Activated CD4-positive, alpha-beta T cell treated with anti-CD3 and anti-CD28 coated beads for 36 hours (primary cell): ENCODE measurements at regions of chr6 and their contacts with region 1.

Region 1: GRCh38 chr6:30396833-30397479 is 52.0 kb downstream of the RPP21 start:
- DNase-seq: peak; percentile 93
- ATAC-seq: peak; percentile 99
- H3K4me3 Mint-ChIP-seq: no peak overlapping the region
- H3K27ac Mint-ChIP-seq: no peak overlapping the region
- H3K4me1 Mint-ChIP-seq: peaks cover 2% of the 10 kb centered on the region
- H3K27me3 Mint-ChIP-seq: peaks cover 27% of the 10 kb centered on the region

Region 2: GRCh38 chr6:29864037-29864795 is 532.7 kb before region 1 on chr6:
- CTCF ChIA-PET with region 1: no interaction called
- POLR2A ChIA-PET with region 1: no interaction called
- intact Hi-C with region 1: no loop called
- DNase-seq: no peak
- ATAC-seq: no peak
- H3K4me3 Mint-ChIP-seq: no peak overlapping the region
- H3K27ac Mint-ChIP-seq: no peak overlapping the region
- H3K4me1 Mint-ChIP-seq: no peaks in the 10 kb centered on the region
- H3K27me3 Mint-ChIP-seq: peaks cover 30% of the 10 kb centered on the region

Region 3: DNA sequence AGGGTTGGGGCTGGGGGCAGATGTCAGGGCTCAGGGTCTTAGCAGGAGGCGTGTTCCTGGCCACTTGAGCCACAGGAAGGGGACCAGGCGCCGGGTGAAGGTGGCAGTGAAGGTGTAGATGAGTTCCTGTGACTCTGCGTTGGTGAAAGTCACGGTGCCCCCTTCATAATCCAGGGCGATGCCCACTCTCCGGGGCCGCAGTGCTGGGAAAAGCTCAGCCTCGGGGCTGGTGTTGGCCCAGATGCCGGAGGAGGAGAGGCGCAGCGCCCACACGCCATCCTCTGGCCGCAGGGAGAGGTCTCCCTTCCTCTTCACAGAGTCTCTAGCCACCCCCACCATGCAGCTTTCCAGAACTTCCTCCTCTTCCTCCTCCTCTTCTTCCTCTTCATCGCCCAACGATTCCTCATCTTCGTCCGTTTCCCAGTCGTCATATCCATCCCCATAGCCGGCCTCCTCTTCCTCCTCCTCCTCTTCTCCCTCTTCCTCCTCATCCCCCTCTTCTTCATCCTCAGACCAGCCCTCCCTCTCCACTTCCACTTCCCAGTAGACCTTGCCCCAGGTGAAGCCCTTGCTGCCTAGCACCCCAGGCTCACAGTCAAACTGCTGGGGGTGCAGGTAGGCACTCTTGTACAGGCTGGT is 211.0 kb before region 1 on chr6:
- CTCF ChIA-PET with region 1: no interaction called
- POLR2A ChIA-PET with region 1: no interaction called
- intact Hi-C with region 1: no loop called
- DNase-seq: no peak
- ATAC-seq: no peak
- H3K4me3 Mint-ChIP-seq: no peak overlapping the region
- H3K27ac Mint-ChIP-seq: no peak overlapping the region
- H3K4me1 Mint-ChIP-seq: no peaks in the 10 kb centered on the region
- H3K27me3 Mint-ChIP-seq: no peaks in the 10 kb centered on the region

Region 4: DNA sequence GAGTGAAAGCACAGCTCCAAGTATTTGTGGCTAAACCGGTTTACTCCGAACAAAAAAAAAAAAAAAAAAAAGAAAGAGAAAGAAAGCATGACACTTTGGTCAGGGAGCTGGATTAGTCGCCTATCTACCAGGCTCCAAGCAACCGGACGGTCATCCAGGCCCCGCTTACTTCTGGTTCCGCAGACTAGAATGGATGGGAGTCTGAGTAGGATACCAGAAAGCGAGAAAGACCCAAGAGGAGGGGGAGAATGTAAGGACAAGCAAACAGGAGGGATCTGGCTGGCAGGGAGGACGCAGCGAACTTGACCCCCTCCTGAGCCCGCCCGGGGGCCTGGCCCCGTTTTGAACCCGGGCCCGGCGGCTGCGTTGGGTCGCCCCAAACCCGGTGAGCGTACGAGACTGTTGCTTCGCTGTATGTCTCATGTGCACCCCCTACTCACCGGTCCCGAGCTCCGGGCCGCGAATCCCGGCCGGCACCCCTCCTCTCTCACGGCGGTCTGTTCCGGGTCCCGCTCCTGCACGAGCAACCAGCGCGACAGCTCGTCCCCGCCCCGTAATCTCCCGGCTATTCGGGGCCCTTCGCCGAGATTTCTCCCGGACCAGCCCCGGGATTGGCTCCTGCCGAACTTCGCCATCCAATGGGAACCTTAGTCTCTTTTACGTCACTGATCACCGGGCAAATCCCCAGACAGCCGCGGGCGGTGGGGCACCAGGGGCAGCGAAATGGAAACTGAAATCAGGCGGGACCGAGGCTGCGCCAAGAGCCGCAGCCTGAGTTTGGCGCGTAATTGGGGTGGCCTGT is 183.9 kb before region 1 on chr6 and contains the start of gene TRIM26:
- CTCF ChIA-PET with region 1: interaction called, 18 read pairs
- POLR2A ChIA-PET with region 1: interaction called, 3 read pairs
- intact Hi-C with region 1: no loop called
- DNase-seq: peak; percentile 98
- ATAC-seq: peak; percentile 90
- H3K4me3 Mint-ChIP-seq: peak within 1 kb of the TSS; percentile 89
- H3K27ac Mint-ChIP-seq: peak within 1 kb of the TSS; percentile 99
- H3K4me1 Mint-ChIP-seq: peaks cover 50% of the 10 kb centered on the region
- H3K27me3 Mint-ChIP-seq: no peaks in the 10 kb centered on the region
- total RNA-seq, gene TRIM26: 48.4 to 60.4 TPM

Region 5: GRCh38 chr6:30219244-30219643 is 177.7 kb before region 1 on chr6:
- CTCF ChIA-PET with region 1: interaction called, 18 read pairs
- POLR2A ChIA-PET with region 1: no interaction called
- intact Hi-C with region 1: loop called (anchors 1 kb)
- DNase-seq: peak; percentile 69
- ATAC-seq: peak; percentile 78
- H3K4me3 Mint-ChIP-seq: no peak overlapping the region
- H3K27ac Mint-ChIP-seq: no peak overlapping the region
- H3K4me1 Mint-ChIP-seq: peaks cover 16% of the 10 kb centered on the region
- H3K27me3 Mint-ChIP-seq: no peaks in the 10 kb centered on the region

Region 6: DNA sequence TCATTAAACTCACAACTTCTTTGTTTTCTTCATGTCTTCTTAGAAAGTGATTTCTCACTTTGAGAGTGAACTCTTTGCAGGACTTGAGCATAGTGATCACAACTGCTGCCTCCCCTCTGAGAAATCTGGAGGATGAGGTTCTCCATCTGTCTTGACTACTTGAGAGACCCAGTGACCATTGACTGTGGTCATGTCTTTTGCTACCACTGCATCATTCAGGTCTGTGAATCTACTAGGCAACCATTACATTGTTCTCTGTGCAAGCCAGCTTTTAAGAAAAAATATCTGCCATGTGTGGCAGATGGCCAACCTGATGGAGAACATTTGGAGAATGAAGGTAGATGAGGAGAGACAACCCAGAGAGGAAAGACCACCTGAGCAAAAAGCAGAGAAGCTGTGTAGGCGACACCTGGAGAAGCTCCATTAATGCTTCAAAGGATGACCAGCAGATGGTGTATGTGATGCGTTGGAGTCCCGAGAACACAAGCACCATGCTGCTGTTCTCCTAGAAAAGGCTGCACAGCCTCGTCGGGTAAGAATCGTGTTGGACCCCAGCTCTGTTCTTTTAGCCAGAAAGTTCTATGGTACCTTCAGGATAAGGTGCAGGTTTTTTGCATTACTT is 158.7 kb before region 1 on chr6:
- CTCF ChIA-PET with region 1: interaction called, 8 read pairs
- POLR2A ChIA-PET with region 1: no interaction called
- intact Hi-C with region 1: loop called (anchors 1 kb)
- DNase-seq: peak; percentile 45
- ATAC-seq: peak; percentile 53
- H3K4me3 Mint-ChIP-seq: no peak overlapping the region
- H3K27ac Mint-ChIP-seq: no peak overlapping the region
- H3K4me1 Mint-ChIP-seq: no peaks in the 10 kb centered on the region
- H3K27me3 Mint-ChIP-seq: peaks cover 31% of the 10 kb centered on the region

Region 7: DNA sequence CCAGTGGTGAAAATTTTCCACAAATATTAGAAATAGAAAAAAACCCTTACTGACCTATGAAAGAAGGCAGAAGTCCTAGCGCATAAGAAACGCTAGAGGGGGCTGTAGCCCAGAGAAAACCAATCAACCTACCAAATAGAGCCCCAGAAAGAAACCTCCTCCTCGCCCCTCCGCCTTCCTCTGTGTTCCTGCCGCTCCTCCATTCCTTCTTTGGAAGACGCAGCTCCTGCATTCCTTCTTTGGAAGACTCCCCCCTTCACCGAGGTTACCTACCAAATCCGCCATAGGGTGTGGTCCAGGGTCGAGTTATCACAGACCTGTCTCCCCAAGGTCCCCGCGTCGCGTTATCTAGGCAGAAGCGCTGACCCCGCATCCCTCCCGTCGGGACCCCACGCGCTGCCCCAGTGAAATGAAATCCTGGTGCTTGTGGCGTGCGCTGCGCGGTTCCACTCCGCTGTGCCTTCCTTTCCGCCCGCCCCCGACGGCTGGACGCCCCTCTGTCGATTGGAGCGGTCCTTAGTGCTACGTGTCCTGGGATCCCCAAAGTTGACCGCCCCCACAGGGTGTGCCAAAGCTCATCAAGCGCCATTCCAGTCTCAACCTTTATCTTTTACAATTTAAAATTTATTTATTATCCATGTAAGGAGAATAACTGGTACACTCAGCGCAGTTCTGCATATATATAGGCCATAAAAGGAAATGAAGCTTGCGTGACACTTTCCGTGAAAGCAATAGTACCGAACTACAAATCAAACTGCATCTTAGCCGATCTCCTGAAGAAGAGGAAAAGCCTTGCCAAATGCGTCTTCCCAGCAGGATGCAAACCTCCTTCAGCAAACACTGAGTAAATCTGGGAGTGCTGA is 39.0 kb before region 1 on chr6:
- CTCF ChIA-PET with region 1: interaction called, 11 read pairs
- POLR2A ChIA-PET with region 1: no interaction called
- intact Hi-C with region 1: loop called (anchors 1 kb)
- DNase-seq: peak; percentile 68
- ATAC-seq: peak; percentile 81
- H3K4me3 Mint-ChIP-seq: peak overlapping the region; percentile 73
- H3K27ac Mint-ChIP-seq: no peak overlapping the region
- H3K4me1 Mint-ChIP-seq: peaks cover 6% of the 10 kb centered on the region
- H3K27me3 Mint-ChIP-seq: peaks cover 51% of the 10 kb centered on the region

Region 8: DNA sequence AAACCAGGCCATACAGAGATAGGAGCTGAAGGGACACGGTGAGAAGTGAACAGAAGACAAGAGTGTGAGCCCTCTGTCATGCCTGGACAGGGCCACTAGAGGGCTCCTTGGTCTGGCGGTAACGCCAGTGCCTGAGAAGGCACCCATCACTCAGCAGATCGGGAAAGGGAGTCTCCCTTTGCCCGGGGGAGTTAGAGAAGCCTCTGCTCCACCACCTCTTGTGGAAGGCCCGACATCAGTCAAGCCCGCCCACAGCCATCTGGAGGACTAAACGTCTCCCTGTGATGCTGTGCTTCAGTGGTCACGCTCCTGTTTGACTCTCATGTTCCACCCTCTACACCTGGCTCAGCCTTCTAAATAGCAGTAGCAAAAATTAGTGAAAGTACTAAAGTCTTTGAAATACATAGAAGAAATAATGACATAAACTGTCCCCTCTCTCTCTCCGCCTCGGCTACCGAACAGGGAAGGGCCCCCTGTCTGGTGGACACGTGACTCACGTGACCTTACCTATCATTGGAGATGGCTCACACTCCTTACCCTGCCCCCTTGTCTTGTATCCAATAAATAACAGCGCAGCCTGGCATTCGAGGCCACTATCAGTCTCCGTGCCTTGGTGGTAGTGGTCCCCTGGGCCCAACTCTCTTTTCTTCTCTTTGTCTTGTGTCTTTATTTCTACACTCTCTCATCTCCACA is 14.7 kb after region 1 on chr6:
- CTCF ChIA-PET with region 1: interaction called, 10 read pairs
- POLR2A ChIA-PET with region 1: no interaction called
- intact Hi-C with region 1: no loop called
- DNase-seq: peak; percentile 79
- ATAC-seq: peak; percentile 76
- H3K4me3 Mint-ChIP-seq: no peak overlapping the region
- H3K27ac Mint-ChIP-seq: no peak overlapping the region
- H3K4me1 Mint-ChIP-seq: peaks cover 6% of the 10 kb centered on the region
- H3K27me3 Mint-ChIP-seq: peaks cover 29% of the 10 kb centered on the region

Region 9: DNA sequence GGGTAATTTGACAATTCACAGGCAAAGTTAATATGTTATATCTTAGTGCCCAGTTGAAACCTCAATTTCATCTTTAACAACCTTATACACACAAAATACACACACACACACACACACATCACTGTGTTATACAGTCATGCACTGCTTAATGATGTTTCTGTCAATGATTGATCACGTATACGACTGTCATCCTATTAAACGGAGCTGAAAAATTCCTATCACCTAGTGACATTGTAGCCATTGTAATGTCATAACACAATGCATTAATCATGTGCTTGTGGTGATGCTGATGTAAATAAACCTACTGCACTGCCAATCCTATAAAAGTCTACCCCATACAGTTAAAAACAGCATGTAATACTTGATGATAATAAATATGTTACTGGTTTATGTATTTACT is 27.6 kb after region 1 on chr6:
- CTCF ChIA-PET with region 1: interaction called, 11 read pairs
- POLR2A ChIA-PET with region 1: no interaction called
- intact Hi-C with region 1: no loop called
- DNase-seq: no peak
- ATAC-seq: no peak
- H3K4me3 Mint-ChIP-seq: no peak overlapping the region
- H3K27ac Mint-ChIP-seq: no peak overlapping the region
- H3K4me1 Mint-ChIP-seq: peaks cover 3% of the 10 kb centered on the region
- H3K27me3 Mint-ChIP-seq: peaks cover 54% of the 10 kb centered on the region